ENCODE measurements at regions of chr4 and their contacts with region 1.

Region 1: DNA sequence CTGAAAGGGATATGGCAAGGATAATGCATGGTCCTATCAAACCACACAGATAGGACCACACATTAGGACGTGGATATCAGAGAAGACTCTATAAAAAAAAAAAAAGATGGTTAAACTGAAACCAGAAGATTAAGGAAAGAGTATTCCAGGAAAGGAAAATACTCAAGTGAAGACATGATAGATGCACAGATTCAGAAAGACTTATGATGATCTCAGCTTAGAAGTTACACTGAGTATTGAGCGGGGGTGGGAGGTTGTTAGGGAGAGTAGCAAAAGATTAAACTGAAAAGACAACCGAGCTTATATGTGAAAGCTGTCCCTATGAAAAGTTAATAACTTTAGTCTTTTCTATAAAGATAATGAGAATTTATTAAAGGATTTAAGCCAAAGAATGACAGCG is 211.0 kb upstream of the EMCN start:
- DNase-seq: no peak
- H3K4me3 ChIP-seq: no peak overlapping the region
- H3K27ac ChIP-seq: no peak overlapping the region
- H3K4me1 ChIP-seq: no peaks in the 10 kb centered on the region
- H3K27me3 ChIP-seq: no peaks in the 10 kb centered on the region
- CTCF ChIP-seq: no peak
- EP300 ChIP-seq: no peak
- POLR2A ChIP-seq: no peak

Region 2: GRCh38 chr4:100106982-100107381 is 621.9 kb before region 1 on chr4:
- intact Hi-C with region 1: loop called (anchors 5 kb)
- DNase-seq: no peak
- H3K4me3 ChIP-seq: no peak overlapping the region
- H3K27ac ChIP-seq: no peak overlapping the region
- H3K4me1 ChIP-seq: no peaks in the 10 kb centered on the region
- H3K27me3 ChIP-seq: no peaks in the 10 kb centered on the region
- CTCF ChIP-seq: no peak
- EP300 ChIP-seq: no peak
- POLR2A ChIP-seq: no peak

Region 3: GRCh38 chr4:100843910-100844309 is 115.0 kb after region 1 on chr4:
- intact Hi-C with region 1: no loop called
- DNase-seq: no peak
- H3K4me3 ChIP-seq: no peak overlapping the region
- H3K27ac ChIP-seq: no peak overlapping the region
- H3K4me1 ChIP-seq: no peaks in the 10 kb centered on the region
- H3K27me3 ChIP-seq: no peaks in the 10 kb centered on the region
- CTCF ChIP-seq: no peak
- EP300 ChIP-seq: no peak
- POLR2A ChIP-seq: no peak

Measured in esophagus muscularis mucosa (tissue), 4 donors.